ENCODE measurements at regions of chr11 and their contacts with region 1.

Region 1: DNA sequence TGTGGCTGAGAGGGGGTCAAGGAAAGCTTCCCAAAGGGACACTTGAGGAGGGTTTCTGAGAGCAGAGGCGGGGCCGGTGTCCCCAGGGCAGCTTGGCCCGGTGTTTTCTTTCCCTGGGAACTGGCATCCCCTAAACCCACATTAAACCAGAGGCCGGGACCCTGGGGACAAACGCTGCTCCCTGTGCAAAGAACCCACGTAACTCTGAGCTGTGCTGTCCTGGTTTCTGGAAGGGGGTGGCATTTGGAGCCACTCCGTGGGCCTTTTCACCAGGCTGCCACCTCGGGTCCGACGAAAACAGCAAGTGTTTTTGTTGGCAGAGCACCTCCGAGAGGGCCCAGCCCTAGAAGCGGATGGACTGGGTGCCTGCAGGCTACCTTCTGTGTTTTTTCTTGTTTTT is 100.2 kb upstream of the ANO1 start:
- DNase-seq: no peak
- ATAC-seq: no peak; the same call in 1 of the 2 replicates
- H3K4me3 Mint-ChIP-seq: no peak overlapping the region
- H3K27ac Mint-ChIP-seq: no peak overlapping the region
- H3K4me1 Mint-ChIP-seq: peaks cover 30% of the 10 kb centered on the region
- H3K27me3 Mint-ChIP-seq: peaks cover 3% of the 10 kb centered on the region; the same call in 1 of the 2 replicates
- CTCF ChIP-seq: no peak

Region 2: DNA sequence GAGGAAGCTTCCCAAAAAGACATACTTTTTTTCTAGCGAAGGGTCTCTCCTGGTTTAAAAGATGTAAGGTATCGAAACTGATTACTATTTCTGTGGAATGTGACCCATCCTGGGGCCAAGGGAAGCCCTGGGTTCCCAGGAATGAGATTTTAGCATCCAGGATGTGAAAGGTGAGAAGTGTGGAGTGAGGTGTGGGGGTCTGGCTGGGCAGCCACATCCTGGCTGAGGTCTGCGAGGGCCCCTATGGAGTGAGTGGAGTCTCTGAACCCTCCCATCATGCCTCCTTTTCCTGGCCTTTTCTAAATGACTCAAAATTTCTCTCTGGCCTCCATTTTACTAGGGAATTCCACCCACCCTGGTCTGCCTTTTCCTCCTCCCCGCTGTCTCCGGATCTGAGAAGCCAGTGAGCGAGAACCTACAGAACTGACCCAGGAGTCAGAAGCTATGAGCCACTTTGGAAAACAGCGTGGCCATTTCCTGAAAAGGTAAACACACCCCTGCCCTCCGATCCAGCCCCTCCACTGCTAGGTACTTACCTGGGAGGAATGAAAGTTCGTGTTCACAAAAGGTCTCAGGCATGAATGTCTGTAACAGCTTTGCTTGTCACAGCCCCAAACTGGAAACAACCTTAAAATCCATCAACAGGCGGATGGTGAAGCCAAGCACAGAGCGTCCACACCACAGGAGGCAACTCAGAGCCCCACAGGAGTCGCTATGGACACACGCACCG is 1302.1 kb after region 1 on chr11:
- CTCF ChIA-PET with region 1: no interaction called
- POLR2A ChIA-PET with region 1: interaction called, 10 read pairs
- DNase-seq: no peak
- ATAC-seq: peak; percentile 91
- H3K4me3 Mint-ChIP-seq: no peak overlapping the region
- H3K27ac Mint-ChIP-seq: peak overlapping the region; percentile 74; the same call in 1 of the 2 replicates
- H3K4me1 Mint-ChIP-seq: peaks cover 20% of the 10 kb centered on the region
- H3K27me3 Mint-ChIP-seq: peaks cover 10% of the 10 kb centered on the region
- CTCF ChIP-seq: no peak

Measured in WTC11 (cell line).